CD8-positive, alpha-beta memory T cell (primary cell): ENCODE measurements at regions of chr2 and their contacts with region 1.

Region 1: DNA sequence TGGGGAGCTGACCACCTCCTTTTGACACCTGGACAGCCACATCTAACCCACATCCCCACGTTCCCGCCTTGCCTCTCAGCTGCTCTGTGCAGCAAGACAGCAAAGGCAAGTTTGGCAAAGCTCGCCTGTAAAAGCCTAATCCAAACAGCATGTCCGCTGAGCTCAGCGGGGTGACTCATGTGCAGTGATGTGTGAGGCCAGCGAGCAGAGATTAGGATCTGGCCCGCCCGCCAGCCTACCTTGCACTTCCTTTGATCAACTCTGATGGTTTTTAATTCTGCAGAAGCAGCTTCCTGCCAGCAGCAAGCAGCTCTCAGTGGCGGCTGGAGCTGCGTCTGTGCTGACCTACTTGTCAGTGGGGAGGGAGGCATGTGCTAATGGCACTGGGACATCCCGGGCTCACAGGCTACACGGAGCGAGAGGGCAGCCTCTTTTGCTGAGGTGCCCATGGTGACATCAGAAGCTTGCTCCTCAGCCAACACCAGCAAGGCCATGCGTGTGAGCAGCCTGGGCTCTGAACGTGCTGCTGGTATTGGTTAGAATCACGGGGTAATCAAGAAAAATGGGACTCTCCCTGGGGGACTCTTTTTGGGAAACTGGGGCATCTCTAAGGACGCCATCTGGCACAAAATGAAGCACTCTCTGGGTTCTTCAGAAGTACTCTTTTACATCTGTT is 36.0 kb upstream of the EML4 start:
- DNase-seq: peak; percentile 85 to 97 (median 91)
- H3K4me3 ChIP-seq: peak overlapping the region; percentile 55
- H3K4me3 Mint-ChIP-seq: peak overlapping the region; percentile 24 to 80 (median 77)
- H3K27ac ChIP-seq: peak overlapping the region; percentile 78
- H3K27ac Mint-ChIP-seq: peak overlapping the region; percentile 76 to 100 (median 100)
- H3K4me1 ChIP-seq: peaks cover 85% of the 10 kb centered on the region
- H3K4me1 Mint-ChIP-seq: peaks cover 84 to 96% (median 95%) of the 10 kb centered on the region in 3 donors
- H3K27me3 ChIP-seq: no peaks in the 10 kb centered on the region
- H3K27me3 Mint-ChIP-seq: no peaks in the 10 kb centered on the region

Region 2: GRCh38 chr2:42117923-42118753 is 15.0 kb before region 1 on chr2:
- CTCF ChIA-PET with region 1: interaction called, 18 read pairs
- POLR2A ChIA-PET with region 1: interaction called, 14 read pairs
- DNase-seq: no peak
- H3K4me3 ChIP-seq: no peak overlapping the region
- H3K4me3 Mint-ChIP-seq: peak overlapping the region in 3 of 7 donors; percentile 8 to 46 (median 10)
- H3K27ac ChIP-seq: no peak overlapping the region
- H3K27ac Mint-ChIP-seq: peak overlapping the region; percentile 44 to 90 (median 82)
- H3K4me1 ChIP-seq: peaks cover 49% of the 10 kb centered on the region
- H3K4me1 Mint-ChIP-seq: peaks cover 46 to 69% (median 69%) of the 10 kb centered on the region in 3 donors
- H3K27me3 ChIP-seq: no peaks in the 10 kb centered on the region
- H3K27me3 Mint-ChIP-seq: no peaks in the 10 kb centered on the region

Region 3: DNA sequence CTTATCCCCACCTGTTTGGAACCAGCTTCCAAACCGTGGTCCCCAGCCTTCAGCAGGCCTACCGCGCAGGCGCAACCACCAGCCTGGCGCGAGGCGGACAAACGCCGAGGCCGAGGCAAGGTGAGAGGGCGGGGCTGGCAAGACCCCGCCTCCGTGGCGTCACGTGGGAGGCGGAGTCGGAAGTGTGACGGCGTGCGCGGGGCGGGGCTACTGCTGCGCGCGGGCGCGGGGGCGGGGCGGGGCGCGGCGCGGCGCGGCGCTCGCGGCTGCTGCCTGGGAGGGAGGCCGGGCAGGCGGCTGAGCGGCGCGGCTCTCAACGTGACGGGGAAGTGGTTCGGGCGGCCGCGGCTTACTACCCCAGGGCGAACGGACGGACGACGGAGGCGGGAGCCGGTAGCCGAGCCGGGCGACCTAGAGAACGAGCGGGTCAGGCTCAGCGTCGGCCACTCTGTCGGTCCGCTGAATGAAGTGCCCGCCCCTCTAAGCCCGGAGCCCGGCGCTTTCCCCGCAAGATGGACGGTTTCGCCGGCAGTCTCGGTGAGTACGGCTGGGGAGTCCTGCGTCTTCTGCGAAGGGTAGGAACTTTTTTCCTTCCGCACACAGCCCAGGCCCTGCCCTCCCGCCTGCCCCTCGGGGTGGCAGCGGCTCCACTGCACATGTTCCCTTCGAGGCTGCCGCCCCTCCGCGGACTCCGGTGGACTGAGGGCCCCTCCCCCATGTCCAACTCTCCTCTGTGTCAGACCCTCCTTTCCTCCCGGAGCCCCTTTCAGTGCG is 36.2 kb after region 1 on chr2 and contains the start of gene EML4:
- CTCF ChIA-PET with region 1: interaction called, 9 read pairs
- POLR2A ChIA-PET with region 1: interaction called, 25 read pairs
- DNase-seq: peak; percentile 83 to 92 (median 89)
- H3K4me3 ChIP-seq: peak within 1 kb of the TSS; percentile 87
- H3K4me3 Mint-ChIP-seq: peak within 1 kb of the TSS in 2 of 7 donors; percentile 33 to 41
- H3K27ac ChIP-seq: peak within 1 kb of the TSS; percentile 84
- H3K27ac Mint-ChIP-seq: peak within 1 kb of the TSS in 6 of 8 donors; percentile 83 to 92 (median 90)
- H3K4me1 ChIP-seq: peaks cover 23% of the 10 kb centered on the region
- H3K4me1 Mint-ChIP-seq: peaks cover 11 to 33% (median 19%) of the 10 kb centered on the region in 3 donors
- H3K27me3 ChIP-seq: no peaks in the 10 kb centered on the region
- H3K27me3 Mint-ChIP-seq: no peaks in the 10 kb centered on the region
- total RNA-seq, gene EML4: 58.0 to 61.5 TPM